ENCODE measurements at regions of chr1 and their contacts with region 1.

Region 1: GRCh38 chr1:2466958-2467554 is 9.0 kb upstream of the PLCH2 start:
- DNase-seq: peak; percentile 45
- H3K4me3 ChIP-seq: no peak overlapping the region
- H3K27ac ChIP-seq: no peak overlapping the region
- H3K4me1 ChIP-seq: no peaks in the 10 kb centered on the region
- CTCF ChIP-seq: no peak

Region 2: GRCh38 chr1:2194898-2195673 is 272.0 kb before region 1 on chr1:
- CTCF ChIA-PET with region 1: no interaction called
- POLR2A ChIA-PET with region 1: no interaction called
- intact Hi-C with region 1: no loop called
- DNase-seq: peak; percentile 87
- H3K4me3 ChIP-seq: peak overlapping the region; percentile 67
- H3K27ac ChIP-seq: peak overlapping the region; percentile 52
- H3K4me1 ChIP-seq: peaks cover 23% of the 10 kb centered on the region
- CTCF ChIP-seq: peak; percentile 91

Region 3: DNA sequence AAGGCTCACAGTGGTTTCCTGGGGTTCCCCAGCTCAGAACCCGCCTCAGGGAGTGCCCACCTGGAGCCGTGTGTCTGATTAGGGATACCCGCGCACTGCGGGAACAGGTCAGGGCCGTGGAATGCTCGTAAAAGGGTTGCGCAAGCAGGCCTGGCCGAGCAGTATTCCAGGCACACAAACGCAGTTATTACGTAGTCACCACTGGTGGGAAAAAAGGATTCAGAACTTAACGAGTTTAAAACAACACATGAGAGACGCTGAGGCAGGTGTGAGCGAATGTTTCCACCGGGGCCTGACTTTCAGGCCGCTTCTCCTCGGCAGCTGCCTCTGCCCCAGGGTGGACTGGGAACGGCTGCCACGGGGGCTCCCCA is 27.3 kb after region 1 on chr1:
- CTCF ChIA-PET with region 1: no interaction called
- POLR2A ChIA-PET with region 1: no interaction called
- intact Hi-C with region 1: loop called (anchors 2 kb)
- DNase-seq: peak; percentile 43
- H3K4me3 ChIP-seq: no peak overlapping the region
- H3K27ac ChIP-seq: no peak overlapping the region
- H3K4me1 ChIP-seq: peaks cover 80% of the 10 kb centered on the region
- CTCF ChIP-seq: no peak

Region 4: GRCh38 chr1:2556277-2556677 is 89.2 kb after region 1 on chr1 and contains the start of gene TNFRSF14:
- CTCF ChIA-PET with region 1: no interaction called
- POLR2A ChIA-PET with region 1: no interaction called
- intact Hi-C with region 1: no loop called
- DNase-seq: peak; percentile 70
- H3K4me3 ChIP-seq: peak within 1 kb of the TSS; percentile 65
- H3K27ac ChIP-seq: peak within 1 kb of the TSS; percentile 41
- H3K4me1 ChIP-seq: peaks cover 20% of the 10 kb centered on the region
- CTCF ChIP-seq: no peak
- total RNA-seq, gene TNFRSF14: 15.0 and 18.5 TPM in 2 replicates